Caco-2 (cell line): ENCODE measurements at regions of chr14 and their contacts with region 1.

Region 1: DNA sequence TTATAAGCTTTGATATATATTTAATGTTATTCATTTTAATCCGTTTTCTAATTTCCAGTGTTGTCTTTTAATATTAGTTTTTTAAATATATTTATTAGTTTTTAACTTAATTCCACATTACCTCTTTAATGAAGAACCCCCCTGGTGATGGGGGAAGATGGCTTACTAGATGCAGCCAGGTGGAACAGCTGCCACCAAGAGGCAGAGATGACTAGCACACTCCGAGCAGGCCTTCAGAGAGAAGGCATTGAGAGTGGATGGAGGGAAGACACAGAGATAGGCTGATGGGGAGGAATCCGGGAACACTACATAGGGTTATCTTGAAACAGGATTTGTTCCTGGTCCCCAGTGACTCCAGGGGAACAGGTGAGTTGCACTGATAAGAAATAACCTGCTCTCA is 771.6 kb downstream of the LRFN5 start:
- DNase-seq: no peak
- H3K4me3 ChIP-seq: no peak overlapping the region
- H3K4me3 Mint-ChIP-seq: no peak overlapping the region
- H3K27ac Mint-ChIP-seq: no peak overlapping the region
- H3K4me1 ChIP-seq: no peaks in the 10 kb centered on the region
- H3K4me1 Mint-ChIP-seq: no peaks in the 10 kb centered on the region
- H3K27me3 ChIP-seq: no peaks in the 10 kb centered on the region
- H3K27me3 Mint-ChIP-seq: peaks cover 3% of the 10 kb centered on the region
- CTCF ChIP-seq: no peak

Region 2: DNA sequence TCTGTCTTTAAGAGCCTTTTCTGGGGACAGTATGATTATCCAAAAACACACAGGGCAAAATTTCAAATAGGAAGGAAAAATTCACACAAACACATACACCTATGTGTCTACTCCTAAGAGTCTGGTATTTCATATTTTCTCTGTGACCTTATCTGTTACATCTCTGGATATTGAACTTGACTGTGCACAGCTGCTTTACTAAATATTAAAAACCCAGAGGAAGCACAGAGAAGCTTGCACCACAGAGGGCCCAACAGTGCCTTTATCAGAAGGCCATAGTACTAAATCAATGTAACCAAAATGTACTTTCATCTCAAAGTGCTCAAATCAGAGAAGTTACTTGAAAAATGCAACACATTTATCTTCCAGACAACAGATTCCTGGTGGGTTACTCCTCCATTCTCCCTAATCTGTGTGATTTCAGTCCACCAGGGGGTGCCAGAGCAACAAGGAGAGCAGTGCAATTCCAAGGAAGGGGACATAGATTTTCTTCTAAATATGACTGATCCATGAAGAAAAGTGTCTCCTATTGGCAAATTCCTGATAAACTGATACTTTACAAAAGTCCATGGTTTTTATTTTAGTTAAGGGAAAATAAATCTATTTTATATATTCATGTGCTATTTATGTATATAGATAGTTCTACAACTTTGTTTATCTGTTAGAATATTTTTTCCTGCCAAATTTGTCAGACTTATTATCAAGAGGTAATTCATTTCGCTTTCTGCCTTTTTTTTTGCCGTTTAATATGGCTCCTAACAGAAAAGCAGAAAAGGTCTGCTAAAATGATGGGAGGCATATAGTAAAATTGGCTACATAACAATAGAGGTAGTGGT is 154.0 kb before region 1 on chr14:
- CTCF ChIA-PET with region 1: no interaction called
- POLR2A ChIA-PET with region 1: no interaction called
- intact Hi-C with region 1: loop called (anchors 5 kb)
- DNase-seq: peak; percentile 63 to 76
- H3K4me3 ChIP-seq: no peak overlapping the region
- H3K4me3 Mint-ChIP-seq: no peak overlapping the region
- H3K27ac Mint-ChIP-seq: no peak overlapping the region
- H3K4me1 ChIP-seq: no peaks in the 10 kb centered on the region
- H3K4me1 Mint-ChIP-seq: no peaks in the 10 kb centered on the region
- H3K27me3 ChIP-seq: no peaks in the 10 kb centered on the region
- H3K27me3 Mint-ChIP-seq: no peaks in the 10 kb centered on the region
- CTCF ChIP-seq: peak; percentile 68 to 76